Vagina (tissue), 2 donors: ENCODE measurements at regions of chr9 and their contacts with region 1.

Region 1: DNA sequence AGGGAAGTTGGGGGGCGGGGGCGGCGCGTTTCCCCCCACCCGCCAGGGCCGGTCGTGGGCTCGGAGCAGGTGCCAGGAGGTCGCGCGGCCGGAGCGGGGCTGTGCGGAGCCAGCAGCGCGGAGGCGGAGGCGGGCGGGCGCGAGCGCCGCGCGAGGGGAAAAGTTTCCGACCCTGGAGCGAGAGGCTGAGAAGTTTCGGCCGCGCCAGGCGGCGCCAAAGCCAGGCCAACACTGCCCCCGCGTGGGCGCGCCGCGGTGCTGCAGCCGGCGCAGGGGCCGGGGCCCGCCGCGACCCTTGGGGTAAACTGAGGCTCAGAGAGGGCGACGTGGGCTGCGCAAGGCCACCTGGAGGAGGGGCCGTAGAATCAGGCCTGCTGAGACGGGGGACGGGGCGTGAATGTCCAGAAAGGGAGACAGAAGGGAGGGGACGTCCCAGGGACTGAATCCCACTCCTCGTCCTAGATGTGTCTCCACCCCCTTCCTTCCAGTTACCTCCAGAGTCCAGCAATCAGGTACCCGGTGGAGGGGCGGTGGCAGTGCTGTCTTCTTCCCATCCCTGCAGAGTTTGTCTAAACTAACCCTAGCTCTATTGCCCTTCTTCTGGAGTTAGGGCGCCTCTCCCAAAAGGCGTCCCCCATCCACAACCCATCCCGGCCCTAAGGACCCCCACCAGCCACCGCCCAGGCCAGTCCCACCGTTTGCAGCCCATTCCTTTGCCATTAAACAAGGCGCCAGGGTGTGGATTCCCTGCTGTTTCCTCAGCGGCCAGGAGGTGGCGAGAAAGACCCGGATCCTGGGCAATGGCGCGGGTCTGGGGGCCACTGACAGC is 10.2 kb downstream of the C9orf50 start:
- DNase-seq: no peak
- H3K4me3 ChIP-seq: peak overlapping the region; percentile 54 to 75
- H3K27ac ChIP-seq: peak overlapping the region; percentile 95
- H3K4me1 ChIP-seq: peaks cover 52% of the 10 kb centered on the region
- H3K27me3 ChIP-seq: no peaks in the 10 kb centered on the region
- CTCF ChIP-seq: peak; percentile 97 to 99 (median 98)
- POLR2A ChIP-seq: no peak

Region 2: DNA sequence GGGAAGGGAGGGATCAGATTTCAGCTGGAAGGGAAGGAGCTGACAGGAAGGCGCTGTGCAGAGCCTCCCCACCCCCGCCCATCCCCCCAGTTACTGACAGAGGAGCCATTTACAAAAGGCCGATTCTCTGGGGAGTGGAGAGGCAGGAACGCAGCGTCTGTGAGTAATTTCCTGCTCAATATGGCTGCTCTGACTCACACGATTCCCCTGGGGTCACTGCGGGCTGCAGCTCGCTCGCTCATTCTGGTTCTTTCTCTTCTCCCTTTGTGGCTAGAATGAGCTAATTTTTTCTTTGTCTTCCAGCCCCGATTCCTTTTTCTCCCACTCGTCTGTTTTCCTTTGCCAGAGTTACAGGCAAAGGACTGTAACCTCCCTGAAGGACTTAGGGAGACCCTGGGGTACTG is 470.7 kb before region 1 on chr9:
- intact Hi-C with region 1: loop called (anchors 2 kb)
- DNase-seq: peak; percentile 96 to 99
- H3K4me3 ChIP-seq: peak overlapping the region; percentile 47 to 53
- H3K27ac ChIP-seq: peak overlapping the region; percentile 100
- H3K4me1 ChIP-seq: peaks cover 78% of the 10 kb centered on the region
- H3K27me3 ChIP-seq: no peaks in the 10 kb centered on the region
- CTCF ChIP-seq: no peak
- POLR2A ChIP-seq: peak in 1 of 2 donors; percentile 35

Region 3: DNA sequence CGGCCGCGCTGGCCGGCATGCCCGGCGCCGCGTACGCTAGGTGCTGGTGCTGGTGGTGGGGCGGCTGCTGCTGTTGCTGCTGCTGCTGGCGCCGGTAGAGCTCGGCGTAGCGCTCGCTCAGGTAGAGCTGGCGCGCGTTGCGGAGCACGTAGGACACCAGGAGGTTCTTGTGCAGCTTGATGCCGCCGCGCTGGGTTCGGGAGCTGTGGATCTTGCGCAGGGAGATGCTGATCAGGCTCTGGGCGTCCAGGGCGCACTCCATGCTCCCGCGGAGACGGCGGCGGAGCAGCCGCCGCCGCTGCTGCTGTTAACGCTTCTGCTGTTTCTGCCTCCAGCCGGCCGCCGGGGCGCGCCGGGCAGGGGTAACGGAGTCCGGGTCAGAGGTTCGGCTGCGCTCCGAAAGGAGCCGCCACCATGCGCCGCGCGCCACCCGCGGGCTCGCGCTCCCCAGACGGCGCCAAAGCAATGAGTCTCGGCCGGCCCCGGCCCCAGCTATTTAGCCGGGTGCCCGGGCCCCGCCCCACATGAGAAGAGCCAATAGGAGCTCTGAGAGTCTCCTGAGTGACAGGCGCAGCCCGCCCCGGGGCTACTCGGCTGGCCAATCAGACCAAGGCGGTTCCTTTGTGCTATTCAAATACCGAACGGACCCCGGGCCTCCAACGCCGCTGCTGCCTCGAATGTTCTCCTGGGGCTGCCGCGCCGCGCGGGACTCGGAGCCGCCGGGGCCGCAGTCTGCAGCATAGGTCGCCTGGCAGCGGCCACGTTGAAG is 432.7 kb before region 1 on chr9 and contains the start of gene IER5L:
- intact Hi-C with region 1: loop called (anchors 2 kb)
- DNase-seq: peak in 1 of 2 donors; percentile 97
- H3K4me3 ChIP-seq: peak within 1 kb of the TSS; percentile 77 to 99
- H3K27ac ChIP-seq: peak within 1 kb of the TSS; percentile 99
- H3K4me1 ChIP-seq: peaks cover 29% of the 10 kb centered on the region
- H3K27me3 ChIP-seq: no peaks in the 10 kb centered on the region
- CTCF ChIP-seq: no peak
- POLR2A ChIP-seq: peak in 1 of 2 donors; percentile 97
- total RNA-seq, gene IER5L: 34.4 TPM

Region 4: GRCh38 chr9:129333953-129334724 is 276.5 kb before region 1 on chr9:
- intact Hi-C with region 1: loop called (anchors 5 kb)
- DNase-seq: peak in 1 of 2 donors; percentile 97
- H3K4me3 ChIP-seq: peak overlapping the region; percentile 23 to 31
- H3K27ac ChIP-seq: peak overlapping the region; percentile 92
- H3K4me1 ChIP-seq: peaks cover 70% of the 10 kb centered on the region
- H3K27me3 ChIP-seq: no peaks in the 10 kb centered on the region
- CTCF ChIP-seq: no peak
- POLR2A ChIP-seq: no peak

Region 5: GRCh38 chr9:129495534-129496325 is 115.0 kb before region 1 on chr9:
- intact Hi-C with region 1: loop called (anchors 5 kb)
- DNase-seq: peak in 1 of 2 donors; percentile 94
- H3K4me3 ChIP-seq: peak overlapping the region; percentile 71 to 86
- H3K27ac ChIP-seq: peak overlapping the region; percentile 99
- H3K4me1 ChIP-seq: peaks cover 82% of the 10 kb centered on the region
- H3K27me3 ChIP-seq: no peaks in the 10 kb centered on the region
- CTCF ChIP-seq: no peak
- POLR2A ChIP-seq: peak in 1 of 2 donors; percentile 10

Region 6: GRCh38 chr9:129550199-129550839 is 60.4 kb before region 1 on chr9:
- intact Hi-C with region 1: loop called (anchors 10 kb)
- DNase-seq: peak in 1 of 2 donors; percentile 90
- H3K4me3 ChIP-seq: peak overlapping the region; percentile 55 to 72
- H3K27ac ChIP-seq: peak overlapping the region; percentile 88
- H3K4me1 ChIP-seq: peaks cover 23% of the 10 kb centered on the region
- H3K27me3 ChIP-seq: no peaks in the 10 kb centered on the region
- CTCF ChIP-seq: no peak
- POLR2A ChIP-seq: no peak

Region 7: DNA sequence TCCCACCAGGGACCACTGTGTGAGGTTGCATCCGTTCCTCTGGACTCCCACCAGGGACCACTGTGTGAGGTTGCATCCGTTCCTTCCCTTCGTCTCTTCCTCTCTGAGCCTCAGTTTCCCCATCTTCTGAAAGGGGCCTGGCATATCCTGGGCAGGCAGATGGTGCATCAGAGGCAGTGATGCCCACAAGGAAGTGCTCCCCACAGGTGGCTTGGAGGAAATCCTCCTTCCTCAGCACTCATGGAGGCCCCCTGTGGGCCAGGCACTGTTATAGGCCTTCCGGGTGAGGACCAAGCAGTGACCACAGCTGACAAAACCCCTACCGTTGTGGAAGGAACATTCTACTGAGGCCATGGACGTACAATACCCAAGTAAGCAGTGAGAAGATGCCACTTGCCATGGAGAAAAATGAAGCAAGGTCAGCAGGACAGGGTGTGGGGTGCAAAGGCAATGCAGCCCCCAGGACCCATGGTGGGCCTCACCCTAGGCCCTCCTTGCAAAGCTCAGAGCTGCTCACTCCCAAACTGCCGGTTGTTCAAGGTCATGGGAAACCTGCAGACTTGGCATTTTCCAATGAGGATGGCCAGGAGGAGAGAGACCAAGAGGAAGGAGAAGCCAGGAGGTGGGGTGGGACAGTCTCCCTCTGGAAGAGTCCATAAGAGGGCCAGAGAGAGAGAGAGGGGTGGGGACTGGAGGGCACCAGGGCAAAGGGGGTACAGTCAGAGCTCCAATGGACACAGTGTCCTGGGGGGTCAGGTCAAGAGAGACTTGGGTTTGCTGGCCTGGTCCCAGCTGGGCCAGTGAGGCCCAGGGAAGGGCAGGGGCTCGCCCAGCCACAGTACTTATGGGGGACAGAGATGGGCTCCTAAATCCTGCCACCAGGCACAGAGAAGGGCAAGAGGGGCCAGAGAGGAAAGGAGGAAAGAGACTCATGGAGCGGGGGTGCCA is 40.9 kb before region 1 on chr9:
- intact Hi-C with region 1: loop called (anchors 1 kb)
- DNase-seq: no peak
- H3K4me3 ChIP-seq: peak overlapping the region; percentile 52 to 56
- H3K27ac ChIP-seq: peak overlapping the region; percentile 94
- H3K4me1 ChIP-seq: peaks cover 38% of the 10 kb centered on the region
- H3K27me3 ChIP-seq: no peaks in the 10 kb centered on the region
- CTCF ChIP-seq: peak in 1 of 3 experiments; percentile 40
- POLR2A ChIP-seq: no peak